ENCODE measurements at regions of chr9 and their contacts with region 1.

Region 1: DNA sequence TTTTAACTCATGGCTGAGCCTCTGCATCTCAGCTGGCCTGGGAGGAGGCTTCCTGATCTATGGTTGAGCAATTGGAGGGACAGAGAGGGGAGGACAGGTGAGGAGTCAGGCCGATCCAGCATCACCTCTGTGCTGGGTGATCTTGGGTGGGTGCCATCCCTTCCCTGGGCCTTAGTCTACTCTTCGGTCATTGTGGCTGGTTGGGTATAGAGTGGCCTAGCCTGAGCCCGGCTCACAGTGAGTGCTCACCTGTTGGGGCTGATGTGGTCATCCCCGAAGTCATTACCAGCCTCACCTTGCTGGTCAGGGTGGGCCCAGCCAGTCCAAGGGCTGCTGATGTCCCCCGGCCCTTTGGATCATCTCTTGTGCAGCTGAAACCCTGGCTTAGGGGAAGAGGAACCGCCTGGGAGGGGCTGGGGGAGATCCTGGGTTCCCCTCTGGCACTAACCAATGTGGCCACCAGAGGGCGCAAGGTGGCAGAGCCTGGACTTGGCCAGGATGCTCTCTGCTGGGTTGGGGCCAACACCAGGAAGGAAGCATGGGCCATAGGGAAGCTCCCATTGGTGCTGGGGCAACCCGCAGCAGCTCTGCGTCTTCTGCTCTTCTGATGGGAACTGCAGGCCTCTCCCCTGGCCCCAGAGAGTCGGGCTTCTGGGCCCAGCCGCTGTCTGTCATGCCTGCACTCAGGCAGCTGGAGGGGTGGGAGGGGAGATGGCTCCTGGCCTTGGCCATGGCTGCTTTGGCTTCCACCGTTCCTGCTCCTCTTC is 17.3 kb upstream of the ODF2 start:
- DNase-seq: peak; percentile 60 to 76 (median 66)
- H3K4me3 ChIP-seq: no peak overlapping the region
- H3K4me3 Mint-ChIP-seq: peak overlapping the region in 1 of 8 donors; percentile 10
- H3K27ac ChIP-seq: no peak overlapping the region
- H3K27ac Mint-ChIP-seq: peak overlapping the region in 1 of 7 donors; percentile 23
- H3K4me1 ChIP-seq: peaks cover 7% of the 10 kb centered on the region
- H3K4me1 Mint-ChIP-seq: peaks cover 0 to 11% (median 3%) of the 10 kb centered on the region in 4 donors
- H3K27me3 ChIP-seq: no peaks in the 10 kb centered on the region
- H3K27me3 Mint-ChIP-seq: no peaks in the 10 kb centered on the region

Region 2: DNA sequence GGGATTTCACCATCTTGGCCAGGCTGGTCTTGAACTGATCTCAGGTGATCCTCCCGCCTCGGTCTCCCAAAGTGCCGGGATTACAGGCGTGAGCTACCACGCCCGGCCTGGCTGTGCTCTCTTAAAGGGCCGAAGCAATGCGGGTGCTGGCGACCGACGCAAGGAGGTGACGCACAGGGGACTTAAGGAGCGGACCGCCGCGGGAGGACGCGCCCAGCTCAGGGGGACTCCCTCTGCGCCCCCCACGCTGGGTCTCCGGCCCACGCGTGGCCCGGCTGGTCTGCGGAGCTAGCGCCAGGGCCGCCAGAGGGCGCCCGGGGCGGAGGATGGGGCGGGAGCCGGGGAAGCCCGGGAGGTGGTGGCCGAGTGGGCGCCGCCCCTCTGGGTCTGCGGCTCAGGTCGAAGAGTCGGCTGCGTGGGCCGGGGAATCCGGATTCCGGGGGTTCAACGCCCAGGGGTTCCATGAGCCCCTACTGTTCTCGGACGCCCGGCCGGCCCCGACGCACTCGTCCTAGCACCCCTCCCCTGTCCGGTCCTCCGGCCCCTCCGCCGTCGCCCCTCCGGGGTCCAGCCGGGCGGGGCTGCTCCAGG is 18.4 kb before region 1 on chr9:
- CTCF ChIA-PET with region 1: interaction called, 16 read pairs
- POLR2A ChIA-PET with region 1: no interaction called
- intact Hi-C with region 1: no loop called
- DNase-seq: peak; percentile 51 to 59 (median 57)
- H3K4me3 ChIP-seq: peak overlapping the region; percentile 29 to 58
- H3K4me3 Mint-ChIP-seq: peak overlapping the region; percentile 77 to 87 (median 84)
- H3K27ac ChIP-seq: peak overlapping the region; percentile 21
- H3K27ac Mint-ChIP-seq: peak overlapping the region in 1 of 7 donors; percentile 70
- H3K4me1 ChIP-seq: peaks cover 14% of the 10 kb centered on the region
- H3K4me1 Mint-ChIP-seq: peaks cover 0 to 13% (median 8%) of the 10 kb centered on the region in 4 donors
- H3K27me3 ChIP-seq: peaks cover 16% of the 10 kb centered on the region
- H3K27me3 Mint-ChIP-seq: peaks cover 17 to 24% of the 10 kb centered on the region in 2 donors

Region 3: GRCh38 chr9:128575469-128575868 is 136.9 kb after region 1 on chr9:
- CTCF ChIA-PET with region 1: no interaction called
- POLR2A ChIA-PET with region 1: no interaction called
- intact Hi-C with region 1: no loop called
- DNase-seq: no peak
- H3K4me3 ChIP-seq: no peak overlapping the region
- H3K4me3 Mint-ChIP-seq: no peak overlapping the region
- H3K27ac ChIP-seq: no peak overlapping the region
- H3K27ac Mint-ChIP-seq: peak overlapping the region in 5 of 7 donors; percentile 48 to 78 (median 65)
- H3K4me1 ChIP-seq: peaks cover 8% of the 10 kb centered on the region
- H3K4me1 Mint-ChIP-seq: peaks cover 10 to 18% (median 16%) of the 10 kb centered on the region in 4 donors
- H3K27me3 ChIP-seq: no peaks in the 10 kb centered on the region
- H3K27me3 Mint-ChIP-seq: no peaks in the 10 kb centered on the region